Mammary epithelial cell (primary cell): ENCODE measurements at regions of chr1 and their contacts with region 1.

Region 1: DNA sequence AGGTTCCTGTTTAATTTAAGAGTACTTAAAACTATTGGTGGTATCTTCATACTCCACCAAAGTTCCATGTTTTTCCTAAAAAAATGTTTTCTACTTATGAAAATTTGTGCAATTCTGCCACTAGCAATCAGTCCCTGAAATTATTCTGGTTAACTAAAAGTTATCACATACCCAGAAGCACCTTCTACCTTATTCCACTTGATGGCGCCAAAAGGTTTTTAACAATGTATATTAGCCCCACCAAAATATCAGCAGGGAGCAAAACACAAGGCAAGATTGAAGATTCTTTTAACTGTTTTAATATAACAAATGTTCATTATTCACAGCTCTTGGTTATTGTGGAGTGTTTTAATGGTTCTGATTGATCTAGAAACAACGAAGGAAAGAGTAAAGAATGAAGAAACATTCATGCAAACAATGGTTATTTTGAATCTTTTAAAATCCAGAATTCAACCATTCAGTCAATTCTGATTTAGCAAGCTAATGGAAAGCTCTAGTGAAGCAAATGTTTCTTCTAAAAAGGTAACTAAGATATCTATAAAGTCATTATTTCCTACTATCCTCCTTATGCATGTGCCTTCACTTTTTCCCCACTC is 67.2 kb downstream of the TTLL7 start:
- DNase-seq: peak; percentile 16
- H3K4me3 ChIP-seq: no peak overlapping the region
- H3K27ac ChIP-seq: no peak overlapping the region
- H3K4me1 ChIP-seq: no peaks in the 10 kb centered on the region
- H3K27me3 ChIP-seq: no peaks in the 10 kb centered on the region
- CTCF ChIP-seq: peak; percentile 67 to 75

Region 2: GRCh38 chr1:84077476-84078107 is 145.8 kb after region 1 on chr1:
- CTCF ChIA-PET with region 1: no interaction called
- dilution Hi-C with region 1: no loop called
- in situ Hi-C with region 1: no loop called
- intact Hi-C with region 1: loop called (anchors 1 kb)
- DNase-seq: peak; percentile 66
- H3K4me3 ChIP-seq: peak overlapping the region; percentile 76 to 92 (median 76)
- H3K27ac ChIP-seq: peak overlapping the region; percentile 60
- H3K4me1 ChIP-seq: no peaks in the 10 kb centered on the region
- H3K27me3 ChIP-seq: no peaks in the 10 kb centered on the region
- CTCF ChIP-seq: no peak

Region 3: GRCh38 chr1:84117868-84118267 is 186.1 kb after region 1 on chr1:
- CTCF ChIA-PET with region 1: no interaction called
- dilution Hi-C with region 1: loop called (anchors 10 kb)
- in situ Hi-C with region 1: loop called (anchors 5 to 10 kb)
- intact Hi-C with region 1: loop called (anchors 1 kb)
- DNase-seq: peak; percentile 37
- H3K4me3 ChIP-seq: no peak overlapping the region
- H3K27ac ChIP-seq: no peak overlapping the region
- H3K4me1 ChIP-seq: peaks cover 8% of the 10 kb centered on the region
- H3K27me3 ChIP-seq: no peaks in the 10 kb centered on the region
- CTCF ChIP-seq: no peak

Region 4: DNA sequence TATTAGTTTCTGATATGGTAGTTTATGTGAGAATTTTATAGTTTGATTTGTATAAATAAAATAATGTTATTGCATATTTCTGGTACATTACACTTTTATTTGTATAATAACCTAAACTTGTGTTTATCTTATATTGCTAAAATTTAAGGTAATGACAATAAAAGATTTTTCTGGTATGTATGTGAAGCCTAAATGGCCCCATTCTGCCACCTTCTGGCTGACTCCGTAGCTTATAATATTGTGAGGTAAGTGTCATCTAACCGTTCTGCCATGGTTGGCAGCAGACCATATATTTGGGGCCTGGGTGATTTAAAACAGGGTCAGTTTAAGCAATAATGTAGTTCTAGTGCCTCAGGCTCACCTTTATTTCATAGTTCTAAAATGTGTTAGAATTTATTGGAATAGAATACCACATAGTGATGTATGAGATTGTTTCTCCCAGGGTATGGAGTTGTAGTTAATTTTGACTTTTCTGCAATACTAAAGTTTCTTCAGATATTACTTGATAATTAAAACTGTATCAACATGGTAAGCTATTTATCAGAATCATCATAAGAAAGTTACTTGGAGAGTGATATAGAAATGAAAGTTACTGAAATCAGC is 191.1 kb after region 1 on chr1:
- CTCF ChIA-PET with region 1: no interaction called
- dilution Hi-C with region 1: loop called (anchors 10 kb)
- in situ Hi-C with region 1: loop called (anchors 5 to 10 kb)
- intact Hi-C with region 1: loop called (anchors 1 kb)
- DNase-seq: peak; percentile 20
- H3K4me3 ChIP-seq: no peak overlapping the region
- H3K27ac ChIP-seq: no peak overlapping the region
- H3K4me1 ChIP-seq: peaks cover 3% of the 10 kb centered on the region
- H3K27me3 ChIP-seq: no peaks in the 10 kb centered on the region
- CTCF ChIP-seq: peak; percentile 60 to 76